Activated CD8-positive, alpha-beta T cell treated with anti-CD3 and anti-CD28 coated beads for 36 hours (primary cell): ENCODE measurements at regions of chr15 and their contacts with region 1.

Region 1: DNA sequence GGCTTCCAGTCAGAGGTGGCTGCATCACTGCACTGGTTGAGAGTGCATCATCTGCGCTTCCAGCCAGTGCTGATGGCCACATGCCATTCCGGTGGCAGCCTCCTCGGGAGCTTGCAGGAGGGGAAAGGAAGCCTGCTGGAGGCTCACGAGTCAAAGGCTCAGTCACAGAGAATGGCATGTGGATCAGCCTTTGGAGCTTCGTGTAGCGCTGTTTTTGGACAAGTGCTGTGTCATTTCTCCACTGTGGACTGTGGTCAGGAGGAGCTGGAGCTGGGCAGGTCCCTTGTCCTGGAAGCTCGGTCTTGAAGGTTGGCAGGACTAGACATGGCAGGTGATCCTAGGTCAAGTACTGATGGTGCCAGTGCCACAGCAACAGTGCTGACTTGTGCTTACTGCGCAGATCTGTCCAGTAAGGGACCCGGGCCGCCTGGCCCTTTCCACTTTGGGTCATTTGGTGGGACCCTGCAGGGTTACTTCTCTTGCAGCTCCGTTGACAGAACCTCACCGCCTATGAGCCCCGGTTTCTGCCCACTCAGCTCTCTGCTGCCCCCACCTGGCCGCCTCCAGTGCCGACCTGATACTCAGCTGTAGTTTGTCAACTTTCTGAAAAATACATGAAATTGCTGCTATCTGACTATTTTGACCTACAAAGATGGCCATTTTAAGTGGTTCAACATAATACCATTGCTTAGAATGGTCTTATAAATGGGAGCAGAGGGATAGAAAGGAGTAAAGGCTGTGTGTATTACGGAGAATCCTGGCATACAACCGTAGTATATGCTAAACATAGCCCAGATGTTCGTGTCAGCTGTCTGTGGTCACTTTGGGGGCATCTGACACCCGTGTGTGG is 27.6 kb upstream of the TRPM1 start:
- DNase-seq: peak; percentile 86
- ATAC-seq: peak; percentile 86
- H3K4me3 Mint-ChIP-seq: no peak overlapping the region
- H3K27ac Mint-ChIP-seq: no peak overlapping the region
- H3K4me1 Mint-ChIP-seq: no peaks in the 10 kb centered on the region
- H3K27me3 Mint-ChIP-seq: no peaks in the 10 kb centered on the region
- CTCF ChIP-seq: peak; percentile 97

Region 2: DNA sequence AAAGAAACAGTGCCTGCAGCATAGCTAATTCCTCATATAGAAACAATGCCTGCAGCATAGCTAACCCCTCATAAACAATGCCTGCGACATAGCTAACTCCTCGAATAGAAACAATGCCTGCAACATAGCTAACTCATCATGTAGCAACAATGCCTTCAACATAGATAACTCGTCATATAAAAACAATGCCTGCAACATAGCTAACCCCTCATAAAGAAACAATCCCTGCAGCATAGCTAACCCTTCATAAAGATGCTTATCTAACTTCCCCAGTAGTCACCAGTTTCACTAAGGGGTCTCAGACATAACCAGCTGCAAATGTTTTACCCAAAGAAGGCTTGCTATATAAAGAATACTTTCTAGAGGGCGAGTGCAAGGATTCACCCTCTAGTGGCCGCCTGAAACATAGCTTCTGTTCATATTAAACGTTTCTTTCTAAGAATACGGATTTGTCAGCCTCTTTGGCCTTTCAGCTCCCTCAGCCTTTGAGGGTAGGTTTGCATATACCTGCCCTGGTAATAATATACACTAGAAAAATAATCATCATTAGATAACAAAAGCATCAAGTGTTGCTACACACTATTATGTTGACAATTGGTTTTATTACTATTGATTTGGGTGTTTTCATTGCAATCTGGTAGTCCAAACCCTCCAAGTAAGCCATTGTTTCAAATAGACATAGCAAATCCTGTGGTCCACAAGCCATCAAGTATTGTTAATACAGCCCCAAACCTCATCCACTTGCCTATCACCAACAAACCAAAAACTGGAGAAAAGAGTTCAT is 269.9 kb before region 1 on chr15:
- CTCF ChIA-PET with region 1: interaction called, 19 read pairs
- POLR2A ChIA-PET with region 1: no interaction called
- intact Hi-C with region 1: no loop called
- DNase-seq: peak; percentile 10
- ATAC-seq: peak; percentile 47
- H3K4me3 Mint-ChIP-seq: no peak overlapping the region
- H3K27ac Mint-ChIP-seq: no peak overlapping the region
- H3K4me1 Mint-ChIP-seq: no peaks in the 10 kb centered on the region
- H3K27me3 Mint-ChIP-seq: no peaks in the 10 kb centered on the region
- CTCF ChIP-seq: peak; percentile 64

Region 3: GRCh38 chr15:30953731-30954378 is 175.3 kb before region 1 on chr15:
- CTCF ChIA-PET with region 1: interaction called, 10 read pairs
- POLR2A ChIA-PET with region 1: no interaction called
- intact Hi-C with region 1: no loop called
- DNase-seq: peak; percentile 33
- ATAC-seq: peak; percentile 73
- H3K4me3 Mint-ChIP-seq: no peak overlapping the region
- H3K27ac Mint-ChIP-seq: peak overlapping the region; percentile 21
- H3K4me1 Mint-ChIP-seq: peaks cover 2% of the 10 kb centered on the region
- H3K27me3 Mint-ChIP-seq: no peaks in the 10 kb centered on the region
- CTCF ChIP-seq: no peak

Region 4: GRCh38 chr15:31049682-31050615 is 79.2 kb before region 1 on chr15:
- CTCF ChIA-PET with region 1: interaction called, 3 read pairs
- POLR2A ChIA-PET with region 1: no interaction called
- intact Hi-C with region 1: loop called (anchors 10 kb)
- DNase-seq: no peak
- ATAC-seq: no peak
- H3K4me3 Mint-ChIP-seq: no peak overlapping the region
- H3K27ac Mint-ChIP-seq: no peak overlapping the region
- H3K4me1 Mint-ChIP-seq: peaks cover 5% of the 10 kb centered on the region
- H3K27me3 Mint-ChIP-seq: peaks cover 1% of the 10 kb centered on the region
- CTCF ChIP-seq: no peak

Region 5: GRCh38 chr15:31111091-31111647 is 18.0 kb before region 1 on chr15:
- CTCF ChIA-PET with region 1: interaction called, 54 read pairs
- POLR2A ChIA-PET with region 1: no interaction called
- intact Hi-C with region 1: no loop called
- DNase-seq: no peak
- ATAC-seq: no peak
- H3K4me3 Mint-ChIP-seq: no peak overlapping the region
- H3K27ac Mint-ChIP-seq: no peak overlapping the region
- H3K4me1 Mint-ChIP-seq: no peaks in the 10 kb centered on the region
- H3K27me3 Mint-ChIP-seq: peaks cover 7% of the 10 kb centered on the region
- CTCF ChIP-seq: no peak